ENCODE measurements at regions of chr17 and their contacts with region 1.

Region 1: GRCh38 chr17:46193626-46194392 is 580 bp upstream of the KANSL1 start:
- DNase-seq: peak; percentile 93 to 95
- H3K4me3 ChIP-seq: peak overlapping the region; percentile 84 to 93 (median 91)
- H3K27ac ChIP-seq: peak overlapping the region; percentile 93 to 100 (median 95)
- H3K4me1 ChIP-seq: peaks cover 32 to 41% of the 10 kb centered on the region in 2 donors
- H3K27me3 ChIP-seq: no peaks in the 10 kb centered on the region
- CTCF ChIP-seq: peak in 3 of 6 experiments; percentile 9 to 34 (median 29)
- POLR2A ChIP-seq: peak in 1 of 2 donors; percentile 88

Region 2: DNA sequence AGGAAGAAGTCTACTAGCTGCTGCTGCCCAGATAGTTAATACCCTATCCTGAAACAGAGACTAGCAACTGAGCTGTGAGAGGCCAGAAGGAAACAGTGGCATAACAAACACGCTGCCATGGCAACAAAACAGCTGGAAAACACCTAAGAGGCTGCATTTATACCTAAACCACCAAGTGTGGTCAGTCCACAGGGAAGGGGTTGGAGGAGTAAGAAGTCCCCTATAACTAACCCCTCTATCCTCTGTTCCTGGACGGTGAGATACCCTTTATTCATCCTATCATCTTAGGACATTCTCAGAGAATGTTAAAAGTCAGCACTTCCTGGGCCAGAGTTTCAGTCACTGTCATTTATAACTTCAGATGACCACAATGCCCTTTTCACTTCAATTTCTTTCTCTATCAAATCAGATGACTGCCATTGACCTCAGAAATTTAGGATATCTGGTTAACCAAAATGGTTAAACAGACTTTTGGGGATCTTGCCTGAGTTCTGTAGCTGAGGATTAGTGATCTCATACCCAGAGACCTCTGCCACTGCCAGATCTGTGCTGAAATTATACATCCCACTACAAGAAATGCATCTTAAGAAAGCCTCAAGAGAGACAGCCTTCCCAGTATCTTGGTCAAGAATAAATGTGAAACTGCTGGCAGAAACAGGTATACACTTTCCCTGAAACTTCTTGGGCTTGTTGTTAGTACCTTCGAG is 158.5 kb before region 1 on chr17:
- intact Hi-C with region 1: loop called (anchors 5 kb)
- DNase-seq: no peak
- H3K4me3 ChIP-seq: no peak overlapping the region
- H3K27ac ChIP-seq: peak overlapping the region in 1 of 3 donors; percentile 19
- H3K4me1 ChIP-seq: peaks cover 24 to 28% of the 10 kb centered on the region in 2 donors
- H3K27me3 ChIP-seq: no peaks in the 10 kb centered on the region
- CTCF ChIP-seq: no peak
- POLR2A ChIP-seq: no peak